ENCODE measurements at regions of chr20 and their contacts with region 1.

Region 1: DNA sequence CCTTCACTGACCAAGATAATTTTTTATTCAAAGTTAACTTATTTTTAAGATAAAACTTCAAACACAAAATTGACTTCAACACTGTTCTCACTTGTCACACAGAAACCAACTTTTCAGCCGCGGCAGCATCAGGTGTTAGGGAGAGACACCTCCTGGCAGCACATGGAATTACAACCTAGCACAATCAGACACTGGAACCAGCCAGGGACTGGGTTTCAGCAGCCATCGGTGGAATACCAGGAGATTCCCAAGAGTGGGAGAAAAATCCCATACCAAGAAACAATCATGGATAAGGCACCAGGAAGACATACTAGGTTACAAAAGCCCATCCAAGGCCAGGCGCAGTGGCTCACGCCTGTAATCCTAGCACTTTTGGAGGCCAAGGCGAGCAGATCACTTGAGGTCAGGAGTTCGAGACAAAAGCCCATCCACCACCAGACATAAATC is 70.0 kb downstream of the SNX5 start:
- DNase-seq: peak; percentile 88
- H3K4me3 ChIP-seq: no peak overlapping the region
- H3K27ac ChIP-seq: no peak overlapping the region
- H3K4me1 ChIP-seq: peaks cover 17 to 88% (median 30%) of the 10 kb centered on the region in 6 donors
- H3K27me3 ChIP-seq: peaks cover 0 to 9% (median 0%) of the 10 kb centered on the region in 7 donors
- CTCF ChIP-seq: peak; percentile 79 to 96 (median 92)
- POLR2A ChIP-seq: no peak

Region 2: GRCh38 chr20:17680836-17681725 is 217.5 kb before region 1 on chr20:
- intact Hi-C with region 1: loop called (anchors 2 kb)
- DNase-seq: peak; percentile 98
- H3K4me3 ChIP-seq: peak overlapping the region; percentile 60 to 97 (median 90)
- H3K27ac ChIP-seq: peak overlapping the region; percentile 83 to 97 (median 92)
- H3K4me1 ChIP-seq: peaks cover 14 to 47% (median 35%) of the 10 kb centered on the region in 6 donors
- H3K27me3 ChIP-seq: peaks cover 0 to 4% (median 0%) of the 10 kb centered on the region in 7 donors
- CTCF ChIP-seq: peak in 9 of 11 experiments; percentile 2 to 89 (median 75)
- POLR2A ChIP-seq: no peak

Region 3: GRCh38 chr20:17759241-17759848 is 139.2 kb before region 1 on chr20:
- intact Hi-C with region 1: no loop called
- DNase-seq: no peak
- H3K4me3 ChIP-seq: no peak overlapping the region
- H3K27ac ChIP-seq: no peak overlapping the region
- H3K4me1 ChIP-seq: no peaks in the 10 kb centered on the region
- H3K27me3 ChIP-seq: no peaks in the 10 kb centered on the region
- CTCF ChIP-seq: no peak
- POLR2A ChIP-seq: no peak